Astrocyte of the cerebellum (primary cell): ENCODE measurements at regions of chr6 and their contacts with region 1.

Region 1: DNA sequence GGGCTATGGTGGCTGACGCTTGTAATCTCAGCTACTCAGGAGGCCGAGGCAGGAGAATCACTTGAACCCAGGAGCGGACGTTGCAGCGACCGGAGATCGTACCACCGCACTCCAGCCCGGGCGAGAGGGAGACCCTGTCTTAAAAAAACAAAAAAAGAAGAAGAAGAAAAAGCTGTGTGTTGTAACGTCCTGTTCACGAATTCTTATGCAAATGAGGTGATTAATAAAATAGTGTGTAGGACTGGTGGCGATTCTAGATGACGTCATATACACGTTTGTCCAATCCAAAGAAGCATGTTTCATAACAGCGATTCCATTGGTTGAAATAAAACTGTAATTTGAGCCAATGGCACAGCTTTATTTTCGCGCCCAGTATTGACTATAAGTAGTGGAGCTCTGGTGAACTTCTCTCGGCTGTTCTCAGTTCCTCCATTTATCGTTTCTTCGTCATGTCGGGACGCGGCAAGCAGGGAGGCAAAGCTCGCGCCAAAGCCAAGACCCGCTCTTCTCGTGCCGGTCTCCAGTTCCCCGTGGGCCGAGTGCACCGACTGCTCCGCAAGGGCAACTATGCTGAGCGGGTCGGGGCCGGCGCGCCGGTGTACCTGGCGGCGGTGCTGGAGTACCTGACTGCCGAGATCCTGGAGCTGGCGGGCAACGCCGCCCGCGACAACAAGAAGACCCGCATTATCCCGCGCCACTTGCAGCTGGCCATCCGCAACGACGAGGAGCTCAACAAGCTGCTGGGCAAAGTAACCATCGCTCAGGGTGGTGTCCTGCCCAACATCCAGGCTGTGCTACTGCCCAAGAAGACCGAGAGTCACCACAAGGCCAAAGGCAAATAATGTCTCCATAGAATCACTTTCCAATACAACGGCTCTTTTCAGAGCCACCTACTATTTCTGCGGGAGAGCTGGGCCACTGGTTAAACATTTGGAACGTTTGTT is 47.0 kb downstream of the OR2B2 start:
- DNase-seq: peak; percentile 98
- H3K4me3 ChIP-seq: peak overlapping the region; percentile 57
- CTCF ChIP-seq: no peak

Region 2: DNA sequence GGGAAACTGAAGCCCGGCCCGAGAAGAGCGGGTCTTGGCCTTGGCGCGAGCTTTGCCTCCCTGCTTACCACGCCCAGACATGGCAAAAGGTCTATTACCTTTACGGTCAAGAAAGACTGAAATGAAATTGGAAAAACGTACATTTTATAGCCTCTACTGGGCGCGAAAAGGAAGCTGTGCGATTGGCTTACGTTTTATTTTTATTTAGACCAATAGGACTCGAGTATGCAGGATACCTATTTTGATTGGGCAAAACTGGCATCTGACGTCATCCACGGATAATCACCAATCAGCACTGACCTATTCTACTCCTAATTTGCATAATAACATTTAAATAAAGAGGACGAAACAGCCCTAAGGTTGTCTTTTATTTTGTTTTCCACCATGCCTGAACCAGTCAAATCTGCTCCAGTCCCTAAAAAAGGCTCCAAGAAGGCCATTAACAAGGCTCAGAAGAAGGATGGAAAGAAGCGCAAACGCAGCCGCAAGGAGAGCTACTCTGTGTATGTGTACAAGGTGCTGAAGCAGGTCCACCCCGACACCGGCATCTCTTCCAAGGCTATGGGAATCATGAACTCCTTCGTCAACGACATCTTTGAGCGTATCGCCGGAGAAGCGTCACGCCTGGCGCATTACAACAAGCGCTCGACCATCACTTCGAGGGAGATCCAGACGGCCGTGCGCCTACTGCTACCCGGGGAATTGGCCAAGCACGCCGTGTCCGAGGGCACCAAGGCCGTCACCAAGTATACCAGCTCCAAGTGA is 50.3 kb before region 1 on chr6:
- in situ Hi-C with region 1: loop called (anchors 5 kb)
- DNase-seq: peak; percentile 96
- H3K4me3 ChIP-seq: peak overlapping the region; percentile 45
- CTCF ChIP-seq: no peak